GM12878 (cell line): ENCODE measurements at regions of chr1 and their contacts with region 1.

Region 1: DNA sequence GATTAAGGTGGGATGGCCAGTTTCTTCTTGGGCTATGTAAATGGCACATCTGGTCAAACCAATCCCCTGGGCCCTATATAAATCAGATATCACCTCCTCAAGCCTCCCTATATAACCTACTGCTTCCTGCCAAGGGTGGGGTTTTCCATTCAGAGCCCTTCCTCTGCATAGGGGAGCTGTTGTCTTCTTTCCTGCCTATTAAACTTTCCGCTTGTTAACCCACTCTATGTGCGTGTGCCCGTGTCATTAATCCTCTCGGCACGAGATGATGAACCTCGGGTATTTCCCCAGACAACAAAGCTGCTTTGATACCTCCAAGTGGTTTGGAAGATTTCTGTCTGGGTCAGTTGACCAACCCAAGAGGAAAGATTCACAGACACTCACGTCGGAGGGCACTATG is 19.3 kb upstream of the SERTAD4 start:
- DNase-seq: peak; percentile 3
- ATAC-seq: peak; percentile 91
- H3K4me3 ChIP-seq: no peak overlapping the region
- H3K27ac ChIP-seq: no peak overlapping the region
- H3K4me1 ChIP-seq: no peaks in the 10 kb centered on the region
- H3K27me3 ChIP-seq: no peaks in the 10 kb centered on the region
- CTCF ChIP-seq: no peak
- EP300 ChIP-seq: peak in 1 of 2 experiments; percentile 55; a peak in 1 of 4 replicates
- POLR2A ChIP-seq: no peak
- RAD21 ChIP-seq: no peak

Region 2: DNA sequence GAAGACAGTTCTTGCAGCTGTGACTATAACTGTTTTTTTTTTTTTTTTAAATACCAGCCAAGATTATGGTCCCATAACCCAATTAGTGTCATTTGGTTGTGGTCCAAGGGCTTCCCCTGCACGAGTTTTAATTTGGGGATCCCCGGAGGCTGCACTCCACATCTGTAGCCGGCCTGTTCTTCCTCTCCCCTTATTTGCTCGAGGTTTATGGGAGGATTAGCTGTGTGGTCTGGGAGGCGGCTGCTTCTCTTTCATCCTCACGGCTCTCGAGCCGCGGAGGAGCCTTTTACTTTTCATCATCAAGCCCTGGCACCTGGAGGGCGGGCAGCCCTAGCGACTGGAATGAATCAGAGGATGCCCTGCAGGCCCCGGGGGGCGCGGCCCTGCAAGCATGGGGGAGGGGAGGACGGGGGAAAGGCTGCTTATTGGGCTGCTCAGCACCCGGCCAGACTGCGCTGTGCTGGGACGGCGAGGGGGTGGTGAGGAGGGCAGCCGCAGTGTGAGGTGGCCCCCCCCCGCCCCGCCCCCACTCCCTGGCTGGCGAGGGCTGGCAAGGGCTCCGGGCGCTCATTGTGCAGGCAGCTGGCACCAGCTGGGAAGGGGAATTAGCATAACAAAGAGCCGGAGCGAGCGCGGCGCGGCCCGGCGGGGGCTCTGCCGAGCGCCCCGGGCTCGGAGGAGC is 37.8 kb after region 1 on chr1:
- CTCF ChIA-PET with region 1: no interaction called
- POLR2A ChIA-PET with region 1: no interaction called
- RAD21 ChIA-PET with region 1: no interaction called
- SMC1A ChIA-PET with region 1: no interaction called
- in situ Hi-C with region 1: no loop called
- intact Hi-C with region 1: loop called (anchors 1 kb)
- DNase-seq: no peak
- ATAC-seq: peak; percentile 70
- H3K4me3 ChIP-seq: no peak overlapping the region
- H3K27ac ChIP-seq: no peak overlapping the region
- H3K4me1 ChIP-seq: no peaks in the 10 kb centered on the region
- H3K27me3 ChIP-seq: peaks cover 15% of the 10 kb centered on the region in 2 experiments; a peak in 3 of 4 replicates
- CTCF ChIP-seq: no peak
- EP300 ChIP-seq: no peak
- POLR2A ChIP-seq: no peak
- RAD21 ChIP-seq: no peak